Cardiac septum (tissue), 1 donor: ENCODE measurements at regions of chrX and their contacts with region 1.

Region 1: DNA sequence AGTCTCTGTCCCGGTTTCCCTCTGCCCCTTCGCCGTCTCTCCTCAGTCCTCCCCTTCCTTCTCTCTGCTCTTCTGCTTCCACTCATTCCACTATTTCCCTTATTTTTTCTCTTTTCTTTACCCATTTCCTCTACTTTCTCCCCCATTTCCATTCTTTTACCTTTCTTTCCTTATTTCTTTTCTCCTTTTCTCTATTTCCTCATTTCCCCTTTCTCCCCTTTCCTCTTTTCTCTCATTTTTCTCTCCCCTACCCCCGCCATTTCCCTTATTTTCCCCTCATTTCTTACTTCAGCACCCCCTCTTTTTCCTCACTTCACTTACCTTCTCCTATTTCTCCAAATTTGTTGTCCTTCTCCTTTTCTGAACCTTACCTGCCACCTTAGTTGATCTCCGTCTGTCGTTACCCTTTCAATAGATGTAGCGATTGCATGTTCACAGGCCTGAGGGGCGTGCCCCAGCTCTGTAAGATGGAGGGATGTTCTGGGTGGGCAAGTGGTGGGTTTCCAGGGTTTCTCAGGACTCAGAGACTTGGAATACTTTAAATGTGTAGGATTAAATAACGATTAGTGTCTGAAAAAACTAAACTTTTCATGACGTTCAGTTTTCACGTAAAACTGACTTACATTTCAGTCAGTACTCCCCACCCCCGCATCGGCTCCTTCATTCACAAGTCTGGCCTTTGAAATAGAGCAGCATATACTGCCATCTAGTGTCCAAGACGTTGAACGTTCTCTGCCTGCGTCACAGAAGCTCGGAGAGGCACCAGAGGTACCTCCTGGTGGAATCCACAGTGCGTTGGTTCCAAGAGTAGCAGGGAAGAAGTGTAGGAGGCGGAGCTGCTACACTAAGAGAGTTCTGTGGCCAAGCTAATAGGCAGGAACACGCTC is 641 bp upstream of the NCBP2L start:
- DNase-seq: peak; percentile 88

Region 2: DNA sequence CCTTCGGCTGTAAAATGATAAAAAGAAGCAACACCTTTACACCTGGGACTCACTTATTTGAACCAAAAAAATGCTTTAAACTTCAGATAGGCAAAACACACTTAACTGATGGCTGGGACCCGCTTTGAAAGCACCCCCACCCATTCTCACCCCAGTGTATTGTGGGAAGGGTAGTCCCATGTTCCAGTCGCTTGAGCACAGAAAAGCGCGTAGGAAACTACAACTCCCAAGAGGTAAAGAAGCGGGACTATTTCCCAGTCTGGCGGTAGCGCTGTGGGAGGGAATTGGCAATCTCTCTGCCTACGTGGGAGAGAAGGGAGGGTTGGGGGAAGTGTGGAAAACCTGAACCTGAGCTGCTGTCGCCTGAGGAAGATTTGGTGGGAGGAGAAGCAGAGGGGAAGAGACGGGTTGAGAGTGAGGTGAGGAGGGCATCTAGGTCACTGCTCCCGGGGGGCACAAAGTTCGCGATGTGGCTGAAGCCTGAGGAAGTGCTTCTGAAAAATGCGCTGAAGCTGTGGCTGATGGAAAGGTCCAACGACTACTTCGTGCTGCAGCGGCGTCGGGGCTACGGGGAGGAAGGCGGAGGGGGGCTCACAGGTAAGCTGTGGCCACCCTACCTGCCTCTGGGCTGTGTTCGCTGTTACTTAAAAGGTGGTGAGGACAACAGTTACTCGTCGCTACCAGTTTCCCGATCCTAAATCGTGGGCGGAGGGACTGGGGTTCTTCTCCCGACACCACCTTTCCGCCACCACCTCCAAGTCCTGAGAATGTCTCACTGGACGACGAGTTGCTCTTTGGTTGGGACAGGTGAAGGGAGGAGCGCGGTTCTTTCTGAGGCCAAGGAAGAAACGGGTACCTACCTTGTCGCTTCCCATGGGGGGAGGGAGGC is 974.3 kb before region 1 on chrX and contains the start of gene TBC1D8B:
- intact Hi-C with region 1: no loop called
- DNase-seq: peak; percentile 84
- total RNA-seq, gene TBC1D8B: 2.5 TPM

Region 3: DNA sequence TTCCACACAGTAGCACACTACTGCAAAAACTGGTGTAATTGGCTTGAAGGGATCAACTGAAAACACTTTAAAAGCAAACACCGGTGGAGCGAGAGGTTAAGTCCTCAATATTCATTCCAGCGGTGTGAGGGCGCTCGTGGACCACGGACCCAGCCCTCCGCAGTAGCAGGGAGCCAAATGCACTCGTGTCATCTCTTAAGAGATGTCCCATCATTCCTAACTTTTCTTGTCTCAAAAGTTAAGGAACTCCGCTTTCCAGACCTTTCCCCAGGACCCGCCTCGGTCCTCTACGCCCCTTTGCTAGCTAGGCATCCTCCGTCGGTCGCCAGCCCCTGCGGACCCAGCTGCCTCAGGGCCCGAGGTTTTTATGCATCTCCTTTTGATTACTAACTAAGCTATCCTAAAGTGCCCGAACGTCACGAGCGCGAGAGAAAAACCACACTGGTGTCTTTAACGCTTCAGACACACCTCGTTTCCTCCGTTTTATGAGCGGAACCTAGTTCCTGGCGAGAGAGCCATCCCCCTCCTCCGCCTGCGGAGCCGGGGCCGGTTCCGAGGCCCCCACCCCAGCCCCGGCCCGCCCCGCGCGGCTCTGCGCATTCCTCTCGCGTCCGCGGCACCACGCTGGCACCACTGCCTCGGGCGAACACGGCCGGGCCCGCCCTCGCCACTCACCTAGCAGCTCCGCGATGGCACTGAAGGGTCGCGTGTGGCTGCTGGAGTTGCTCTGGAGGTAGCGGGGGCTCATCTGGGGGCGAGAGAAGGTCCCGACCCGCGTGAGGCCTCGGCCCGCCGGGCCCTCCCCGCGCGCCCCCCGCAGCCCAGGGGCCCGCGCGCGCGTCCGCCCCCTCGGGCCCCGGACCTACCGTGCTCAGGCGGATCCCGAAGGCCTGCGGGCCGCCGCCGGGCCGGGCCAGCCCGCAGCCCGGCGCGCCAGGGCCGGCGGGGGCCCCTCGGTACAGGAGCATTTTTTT is 777.6 kb before region 1 on chrX:
- intact Hi-C with region 1: loop called (anchors 10 kb)
- DNase-seq: no peak

Region 4: GRCh38 chrX:107672955-107673378 is 103.9 kb before region 1 on chrX:
- intact Hi-C with region 1: loop called (anchors 1 kb)
- DNase-seq: peak; percentile 80

Region 5: DNA sequence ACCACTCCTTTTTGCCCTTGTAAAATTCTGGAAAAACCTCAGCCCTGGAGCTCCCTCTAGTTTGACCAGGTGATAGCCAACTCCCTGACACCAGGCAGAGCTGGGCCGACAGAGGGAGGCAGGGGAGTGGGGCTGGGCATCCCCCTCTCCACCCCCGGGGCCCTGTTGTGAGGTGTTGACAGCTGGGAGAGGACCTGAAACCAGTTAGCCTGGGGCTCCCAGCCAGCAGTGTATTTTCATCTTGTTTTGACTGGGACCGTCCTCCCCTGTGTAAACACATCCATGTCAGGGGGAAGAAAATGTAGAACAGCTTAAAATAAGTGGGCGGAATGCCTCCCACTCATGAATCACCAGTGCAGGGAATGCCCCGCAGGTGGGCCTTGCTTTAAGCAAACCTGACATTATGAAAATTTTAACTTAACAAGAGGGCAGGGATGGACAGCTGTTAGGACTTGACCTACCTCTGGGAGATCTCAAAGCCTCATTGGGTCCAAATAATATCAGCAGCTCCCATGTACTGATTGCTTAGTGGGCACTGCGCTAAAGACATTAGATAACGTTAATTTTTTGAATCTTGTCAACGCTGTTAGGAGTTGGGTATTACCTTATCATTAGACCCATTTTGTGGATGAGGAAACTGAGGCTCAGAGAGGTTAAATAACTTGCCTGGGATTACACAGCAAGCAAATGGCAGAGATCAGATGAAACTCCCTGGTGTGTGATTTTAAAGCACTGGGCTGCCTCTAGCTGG is 47.2 kb before region 1 on chrX:
- intact Hi-C with region 1: loop called (anchors 2 kb)
- DNase-seq: peak; percentile 84

Region 6: GRCh38 chrX:107849740-107850421 is 73.0 kb after region 1 on chrX:
- intact Hi-C with region 1: loop called (anchors 5 kb)
- DNase-seq: no peak